ENCODE measurements at regions of chr5 and their contacts with region 1.

Region 1: DNA sequence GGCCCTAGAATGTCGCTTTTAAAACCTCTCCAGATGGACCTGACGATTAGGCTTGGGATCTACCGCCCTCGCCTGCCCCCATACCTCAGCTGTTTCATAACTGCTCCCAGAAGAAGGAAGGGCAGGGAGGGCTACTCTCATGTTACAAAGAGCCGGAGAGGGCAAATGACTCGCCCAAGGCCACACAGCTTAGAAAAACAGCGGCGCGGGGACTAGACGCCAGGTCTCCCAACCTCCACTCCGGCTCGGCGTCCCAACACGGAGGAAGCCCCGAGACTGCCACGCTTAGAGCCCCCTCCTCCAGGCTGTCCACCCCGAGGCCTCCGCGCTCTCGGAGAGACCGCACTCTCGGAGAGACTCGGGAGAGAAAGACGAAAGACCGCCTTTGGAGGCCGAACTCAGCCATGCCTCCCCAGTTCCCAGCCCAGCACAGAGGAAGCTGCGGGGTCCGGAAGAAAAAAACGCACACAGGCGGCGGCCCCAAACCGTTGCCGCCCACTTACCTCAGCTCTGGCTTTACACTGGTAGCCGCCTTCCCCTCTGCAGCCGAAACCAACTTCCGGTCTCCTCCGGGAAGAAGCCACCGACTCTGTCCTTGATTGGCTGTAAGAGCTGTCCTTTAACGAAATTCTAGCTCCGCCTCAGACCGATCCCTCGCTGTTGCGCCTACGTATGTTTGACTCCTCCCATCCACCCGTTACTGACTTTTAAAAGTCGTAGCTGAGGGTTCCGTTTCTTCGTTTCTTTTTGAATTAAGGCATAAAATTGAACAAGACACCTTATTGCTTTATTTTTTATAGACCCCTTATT is at the start of gene MED7:
- DNase-seq: peak; percentile 97
- H3K4me3 Mint-ChIP-seq: peak within 1 kb of the TSS; percentile 94
- H3K27ac Mint-ChIP-seq: peak within 1 kb of the TSS; percentile 98
- H3K4me1 Mint-ChIP-seq: peaks cover 38% of the 10 kb centered on the region
- H3K27me3 Mint-ChIP-seq: no peaks in the 10 kb centered on the region
- total RNA-seq, gene MED7: 21.0 to 21.2 TPM

Region 2: DNA sequence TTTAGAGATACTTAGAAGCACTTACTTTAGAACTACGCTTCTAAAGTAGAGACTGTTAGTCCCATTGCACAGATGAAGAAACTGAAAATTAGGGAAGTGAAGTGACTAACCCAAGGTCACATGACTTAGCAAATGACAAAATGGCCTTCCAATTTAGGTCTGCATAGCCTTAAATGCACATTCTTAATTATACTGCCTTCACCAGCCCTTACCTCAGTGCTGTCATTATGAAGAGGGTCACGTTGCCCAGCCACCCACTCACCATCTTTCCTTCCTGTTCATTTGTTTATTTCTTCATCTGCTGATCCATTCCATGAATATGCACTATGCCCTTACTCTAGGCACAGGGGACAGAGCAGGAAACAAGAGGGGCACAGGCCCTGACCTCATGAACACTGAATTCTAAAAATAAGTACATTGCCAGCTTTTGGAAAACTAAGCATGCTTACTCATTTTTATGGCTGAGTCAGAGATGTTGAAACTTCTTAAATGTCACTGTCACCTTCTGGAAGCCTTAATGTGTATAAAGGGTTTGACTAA is 42.3 kb before region 1 on chr5:
- CTCF ChIA-PET with region 1: no interaction called
- intact Hi-C with region 1: loop called (anchors 1 kb)
- DNase-seq: peak; percentile 71
- H3K4me3 Mint-ChIP-seq: peak overlapping the region; percentile 32
- H3K27ac Mint-ChIP-seq: peak overlapping the region; percentile 96
- H3K4me1 Mint-ChIP-seq: peaks cover 29% of the 10 kb centered on the region
- H3K27me3 Mint-ChIP-seq: no peaks in the 10 kb centered on the region

Region 3: GRCh38 chr5:157108976-157109375 is 33.5 kb before region 1 on chr5 and contains the start of gene HAVCR2:
- CTCF ChIA-PET with region 1: no interaction called
- intact Hi-C with region 1: loop called (anchors 1 kb)
- DNase-seq: peak; percentile 87
- H3K4me3 Mint-ChIP-seq: peak within 1 kb of the TSS; percentile 65
- H3K27ac Mint-ChIP-seq: peak within 1 kb of the TSS; percentile 87
- H3K4me1 Mint-ChIP-seq: peaks cover 40% of the 10 kb centered on the region
- H3K27me3 Mint-ChIP-seq: no peaks in the 10 kb centered on the region
- total RNA-seq, gene HAVCR2: 10.2 to 10.4 TPM

Region 4: GRCh38 chr5:157172403-157172802 is 29.9 kb after region 1 on chr5:
- CTCF ChIA-PET with region 1: interaction called, 9 read pairs
- intact Hi-C with region 1: loop called (anchors 1 kb)
- DNase-seq: peak; percentile 96
- H3K4me3 Mint-ChIP-seq: peak overlapping the region; percentile 64
- H3K27ac Mint-ChIP-seq: peak overlapping the region; percentile 100
- H3K4me1 Mint-ChIP-seq: peaks cover 86% of the 10 kb centered on the region
- H3K27me3 Mint-ChIP-seq: no peaks in the 10 kb centered on the region

Region 5: GRCh38 chr5:157180374-157181264 is 38.1 kb after region 1 on chr5 and contains the start of gene ITK:
- CTCF ChIA-PET with region 1: interaction called, 9 read pairs
- intact Hi-C with region 1: loop called (anchors 1 kb)
- DNase-seq: no peak
- H3K4me3 Mint-ChIP-seq: peak within 1 kb of the TSS; percentile 98
- H3K27ac Mint-ChIP-seq: peak within 1 kb of the TSS; percentile 100
- H3K4me1 Mint-ChIP-seq: peaks cover 50% of the 10 kb centered on the region
- H3K27me3 Mint-ChIP-seq: no peaks in the 10 kb centered on the region
- total RNA-seq, gene ITK: 340 TPM

Region 6: DNA sequence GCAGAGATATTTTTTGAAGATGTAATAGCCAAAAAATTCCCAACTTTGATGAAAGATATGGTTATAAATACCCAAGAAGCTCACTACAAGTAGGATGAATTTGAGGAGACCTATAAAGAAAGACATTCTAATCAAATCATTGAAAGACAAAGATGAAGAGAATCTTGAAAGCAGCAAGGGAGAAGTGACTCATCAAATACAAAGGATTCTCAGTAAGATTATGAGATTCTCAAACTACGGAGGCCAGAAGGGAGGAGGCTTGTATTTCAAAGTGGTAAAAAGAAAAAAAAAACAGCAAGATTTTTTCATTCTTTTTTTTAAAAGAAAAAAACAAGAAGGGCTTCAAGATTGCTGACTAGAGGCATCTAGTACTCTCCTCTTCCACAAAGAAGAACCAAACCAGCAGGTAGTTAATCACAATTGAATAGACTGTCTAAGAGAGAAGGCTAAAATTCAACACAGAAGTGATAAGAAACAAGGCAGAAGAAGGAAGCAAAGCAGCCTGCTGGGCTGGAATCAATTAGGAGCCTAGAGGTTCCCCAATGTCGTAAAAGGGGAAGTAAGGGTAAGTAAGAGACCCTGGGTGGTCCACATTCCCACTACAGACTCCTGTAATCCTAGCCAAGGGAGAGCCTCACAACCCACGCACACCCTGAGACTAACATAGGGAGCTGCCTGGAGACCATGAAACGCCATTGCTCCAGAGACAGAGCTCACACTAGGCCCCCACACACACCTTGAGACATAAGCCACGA is 258.4 kb after region 1 on chr5:
- CTCF ChIA-PET with region 1: no interaction called
- intact Hi-C with region 1: loop called (anchors 2 kb)
- DNase-seq: no peak
- H3K4me3 Mint-ChIP-seq: no peak overlapping the region
- H3K27ac Mint-ChIP-seq: no peak overlapping the region
- H3K4me1 Mint-ChIP-seq: peaks cover 10% of the 10 kb centered on the region
- H3K27me3 Mint-ChIP-seq: no peaks in the 10 kb centered on the region

Region 7: DNA sequence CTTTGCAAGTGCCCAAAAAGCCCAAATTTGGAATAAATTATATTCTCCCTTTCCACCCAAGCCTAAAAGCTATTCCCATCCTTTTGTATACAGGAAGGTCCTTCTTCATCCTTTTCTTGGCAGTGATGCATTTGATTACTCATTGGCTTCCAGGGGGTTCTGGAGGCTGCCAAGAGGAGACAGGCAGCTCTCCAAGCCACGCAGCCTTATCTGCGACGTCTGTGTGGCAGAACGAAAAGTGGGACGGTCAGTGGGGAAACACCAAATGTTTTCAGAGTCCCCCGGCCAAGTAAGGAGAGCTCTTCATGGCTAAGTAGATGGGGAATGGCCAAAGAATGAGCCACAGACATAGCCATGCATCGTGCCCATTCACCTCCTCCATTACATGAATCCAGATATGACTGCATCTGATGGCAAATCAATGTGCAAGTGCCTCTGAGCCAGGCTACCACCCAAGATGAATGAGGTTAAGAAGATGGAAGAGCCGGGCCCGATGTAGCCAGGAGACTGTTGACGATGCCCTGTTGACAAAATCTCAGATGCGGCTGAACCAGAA is 420.9 kb after region 1 on chr5:
- CTCF ChIA-PET with region 1: no interaction called
- intact Hi-C with region 1: no loop called
- DNase-seq: no peak
- H3K4me3 Mint-ChIP-seq: no peak overlapping the region
- H3K27ac Mint-ChIP-seq: no peak overlapping the region
- H3K4me1 Mint-ChIP-seq: no peaks in the 10 kb centered on the region
- H3K27me3 Mint-ChIP-seq: no peaks in the 10 kb centered on the region

Region 8: DNA sequence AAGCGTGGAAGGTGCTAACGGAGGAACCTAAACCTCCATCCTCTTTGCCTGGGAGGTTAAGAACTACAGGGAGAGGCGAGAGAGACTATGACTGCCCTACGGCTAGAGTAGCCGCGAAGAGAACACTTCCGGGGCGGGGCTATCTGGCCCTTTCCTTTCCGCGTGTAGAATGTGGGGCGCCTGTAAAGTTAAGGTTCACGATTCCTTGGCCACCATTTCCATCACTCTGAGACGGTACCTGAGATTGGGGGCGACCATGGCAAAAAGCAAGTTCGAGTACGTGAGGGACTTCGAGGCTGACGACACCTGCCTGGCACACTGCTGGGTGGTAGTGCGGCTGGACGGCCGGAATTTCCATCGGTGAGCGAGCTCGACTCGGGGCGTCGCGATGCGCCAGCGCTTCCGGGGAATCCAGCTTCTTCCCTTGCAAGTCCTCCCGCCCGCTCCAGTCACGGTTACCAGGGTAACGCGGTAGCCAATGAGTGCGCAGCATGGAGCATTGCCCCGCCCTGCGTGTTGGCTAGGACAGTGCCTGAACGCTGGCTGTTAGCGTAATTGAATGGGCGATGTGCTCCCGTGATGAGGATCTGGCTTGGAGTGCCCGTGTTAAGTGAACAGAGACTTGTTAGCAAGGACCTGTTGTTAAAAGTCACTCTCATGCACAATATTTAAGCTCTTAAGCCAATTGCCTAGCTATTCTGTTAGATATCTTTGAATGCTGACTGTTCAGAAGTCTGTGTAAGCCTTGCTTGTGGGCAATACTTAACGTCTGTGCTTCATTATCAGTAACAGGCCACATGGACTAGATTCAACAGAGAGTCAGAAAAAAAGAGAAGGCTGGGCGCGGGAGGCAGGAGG is 589.0 kb after region 1 on chr5 and contains the start of gene THG1L:
- CTCF ChIA-PET with region 1: interaction called, 3 read pairs
- intact Hi-C with region 1: loop called (anchors 1 kb)
- DNase-seq: peak; percentile 100
- H3K4me3 Mint-ChIP-seq: peak within 1 kb of the TSS; percentile 97
- H3K27ac Mint-ChIP-seq: peak within 1 kb of the TSS; percentile 95
- H3K4me1 Mint-ChIP-seq: peaks cover 25% of the 10 kb centered on the region
- H3K27me3 Mint-ChIP-seq: no peaks in the 10 kb centered on the region
- total RNA-seq, gene THG1L: 28.1 to 30.2 TPM

Measured in activated naive CD4-positive, alpha-beta T cell treated with anti-CD3 and anti-CD28 coated beads for 36 hours (primary cell).